ENCODE measurements at regions of chr1 and their contacts with region 1.

Region 1: GRCh38 chr1:150089846-150090520 is 22.4 kb downstream of the VPS45 start:
- DNase-seq: no peak
- H3K4me3 ChIP-seq: no peak overlapping the region
- H3K27ac ChIP-seq: no peak overlapping the region
- H3K4me1 ChIP-seq: no peaks in the 10 kb centered on the region
- H3K27me3 ChIP-seq: no peaks in the 10 kb centered on the region
- CTCF ChIP-seq: no peak

Region 2: DNA sequence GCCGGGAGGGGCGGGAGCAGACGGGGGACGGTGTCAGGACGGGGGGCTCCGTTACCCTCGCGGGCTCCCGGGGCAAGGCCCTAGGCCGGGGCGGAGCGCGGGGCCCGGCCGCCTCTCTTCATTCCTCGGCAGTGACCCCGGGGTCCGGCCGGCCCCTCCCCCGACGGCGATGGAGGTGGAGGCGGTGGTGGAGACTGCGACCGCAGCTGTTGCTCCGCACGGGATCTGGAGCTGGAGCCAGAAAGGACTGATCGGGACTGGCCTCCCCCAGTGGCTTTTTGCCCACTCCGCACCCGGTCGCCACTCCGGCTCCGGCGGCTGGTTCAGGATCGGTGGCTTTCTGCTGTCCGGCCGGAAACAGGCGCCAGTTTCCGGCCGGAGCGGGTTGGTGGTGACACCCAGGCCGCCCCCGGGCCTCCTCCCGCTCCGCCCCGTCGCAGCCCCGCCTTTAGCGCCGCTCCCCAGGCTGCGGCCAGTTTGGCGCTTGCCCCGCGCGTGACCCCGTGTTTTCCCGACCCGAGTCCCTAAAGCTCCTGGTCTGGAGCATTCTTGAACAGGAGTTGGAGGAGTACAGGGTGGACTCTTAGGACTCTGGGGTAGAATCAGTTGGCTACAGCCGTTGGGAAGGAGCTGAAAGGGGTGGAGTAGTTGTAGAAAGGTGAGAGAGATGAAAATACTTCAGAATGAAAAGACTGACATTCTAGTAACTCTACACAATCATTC is 79.4 kb before region 1 on chr1 and contains the start of gene OTUD7B:
- intact Hi-C with region 1: no loop called
- DNase-seq: peak; percentile 92 to 96 (median 95)
- H3K4me3 ChIP-seq: peak within 1 kb of the TSS; percentile 86 to 96 (median 94)
- H3K27ac ChIP-seq: peak within 1 kb of the TSS; percentile 98 to 99
- H3K4me1 ChIP-seq: peaks cover 3 to 31% (median 11%) of the 10 kb centered on the region in 3 donors
- H3K27me3 ChIP-seq: no peaks in the 10 kb centered on the region
- CTCF ChIP-seq: no peak
- total RNA-seq, gene OTUD7B: 28.1 TPM

Region 3: DNA sequence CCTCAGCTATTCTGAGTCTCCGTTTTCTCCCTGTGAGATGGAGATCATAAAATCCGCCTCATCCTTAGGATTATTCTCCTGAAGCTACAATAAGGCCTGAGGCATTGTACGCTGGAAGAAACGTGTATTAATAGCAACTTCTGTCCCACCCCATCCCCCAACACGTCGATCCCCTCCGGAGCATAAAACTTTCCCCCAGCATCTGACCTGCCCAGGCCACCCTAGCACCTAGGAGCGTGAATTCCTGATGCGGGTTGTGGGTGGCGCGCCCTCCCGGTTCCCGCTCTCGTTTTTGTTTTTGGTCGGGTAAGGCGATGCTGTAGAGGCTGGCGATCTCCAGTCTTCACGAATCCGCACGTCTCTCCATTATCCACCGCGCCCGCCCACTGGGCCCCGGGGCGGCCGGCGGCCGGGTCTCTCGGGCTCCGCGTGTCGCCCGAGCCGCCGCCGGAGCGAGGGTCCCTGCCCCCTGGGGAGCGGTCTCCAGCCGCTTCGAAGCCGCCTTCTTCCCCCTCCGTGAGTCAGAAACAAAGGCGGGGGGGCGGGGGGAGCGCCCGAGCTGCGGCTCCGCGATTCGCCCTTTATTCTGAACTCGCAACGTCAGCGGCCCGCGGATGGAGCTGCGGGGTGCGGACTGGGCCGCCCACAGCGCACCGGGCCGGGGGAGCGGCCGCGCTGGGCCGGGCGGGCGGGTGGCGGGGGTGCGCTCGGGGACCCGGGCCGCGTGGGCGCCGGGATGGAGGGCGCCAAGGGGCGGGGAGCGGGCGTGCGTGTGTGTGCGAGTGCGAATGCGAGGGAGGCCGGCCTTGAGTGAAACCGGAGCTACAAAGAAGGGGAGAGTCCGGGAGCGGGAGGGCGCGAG is 59.5 kb after region 1 on chr1 and contains the start of gene PLEKHO1:
- intact Hi-C with region 1: loop called (anchors 10 kb)
- DNase-seq: peak; percentile 82 to 93 (median 89)
- H3K4me3 ChIP-seq: peak within 1 kb of the TSS; percentile 54 to 86 (median 54)
- H3K27ac ChIP-seq: peak within 1 kb of the TSS; percentile 71 to 80
- H3K4me1 ChIP-seq: peaks cover 0 to 5% (median 0%) of the 10 kb centered on the region in 3 donors
- H3K27me3 ChIP-seq: no peaks in the 10 kb centered on the region
- CTCF ChIP-seq: no peak
- total RNA-seq, gene PLEKHO1: 32.7 TPM

Measured in kidney (tissue), 22 donors.